Esophagus muscularis mucosa (tissue), 4 donors: ENCODE measurements at regions of chrX and their contacts with region 1.

Region 1: DNA sequence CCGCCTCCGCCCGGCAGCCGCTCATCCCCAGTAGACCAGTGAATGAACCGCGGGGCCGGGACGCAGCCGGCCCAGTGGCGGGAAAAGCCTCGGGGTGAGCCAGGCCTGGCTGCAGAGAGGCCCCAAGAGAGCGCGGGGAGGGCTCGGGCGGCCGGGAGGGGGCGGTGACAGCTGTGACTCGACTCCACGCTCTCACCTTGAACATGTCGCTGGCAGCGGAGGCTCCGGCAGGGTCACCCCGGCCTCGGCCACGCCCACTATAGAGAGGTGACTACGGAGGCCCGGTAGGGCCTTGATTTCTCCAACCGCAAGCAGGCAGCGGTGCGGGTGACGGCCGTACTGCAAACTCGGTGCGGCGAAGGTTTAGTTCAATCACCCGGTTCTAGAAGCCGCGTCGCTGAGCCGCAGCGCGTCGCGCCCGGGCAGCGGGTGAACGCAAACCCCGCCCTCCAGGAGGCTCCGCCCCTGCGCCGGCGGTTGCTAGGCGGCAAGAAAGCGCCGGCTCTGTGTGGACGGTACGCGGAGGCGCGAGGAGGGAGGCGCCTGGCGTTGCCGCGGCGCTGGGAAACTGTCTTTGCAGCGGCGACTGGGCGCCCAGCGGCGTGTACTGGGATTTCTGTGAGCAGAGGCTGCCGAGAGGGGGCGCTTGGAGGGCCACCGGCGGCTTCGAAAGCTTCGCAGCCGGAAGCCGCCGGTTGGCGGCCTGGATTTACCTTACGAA is at the starts of genes APOO and CXorf58:
- DNase-seq: peak; percentile 95
- H3K4me3 ChIP-seq: peak within 1 kb of the TSS; percentile 59 to 67 (median 66)
- H3K27ac ChIP-seq: peak within 1 kb of the TSS; percentile 88 to 90 (median 90)
- H3K4me1 ChIP-seq: peaks cover 6 to 19% (median 14%) of the 10 kb centered on the region in 4 donors
- H3K27me3 ChIP-seq: no peaks in the 10 kb centered on the region
- CTCF ChIP-seq: peak; percentile 66 to 80 (median 74)
- EP300 ChIP-seq: no peak
- POLR2A ChIP-seq: no peak
- total RNA-seq, gene APOO: 7.5 to 10.2 (median 9.5) TPM
- total RNA-seq, gene CXorf58: 0.29 TPM in 1 of 4 donors, not detected in the others

Region 2: GRCh38 chrX:23817172-23817601 is 90.5 kb before region 1 on chrX:
- intact Hi-C with region 1: no loop called
- DNase-seq: no peak
- H3K4me3 ChIP-seq: no peak overlapping the region
- H3K27ac ChIP-seq: no peak overlapping the region
- H3K4me1 ChIP-seq: no peaks in the 10 kb centered on the region
- H3K27me3 ChIP-seq: no peaks in the 10 kb centered on the region
- CTCF ChIP-seq: no peak
- EP300 ChIP-seq: no peak
- POLR2A ChIP-seq: no peak

Region 3: DNA sequence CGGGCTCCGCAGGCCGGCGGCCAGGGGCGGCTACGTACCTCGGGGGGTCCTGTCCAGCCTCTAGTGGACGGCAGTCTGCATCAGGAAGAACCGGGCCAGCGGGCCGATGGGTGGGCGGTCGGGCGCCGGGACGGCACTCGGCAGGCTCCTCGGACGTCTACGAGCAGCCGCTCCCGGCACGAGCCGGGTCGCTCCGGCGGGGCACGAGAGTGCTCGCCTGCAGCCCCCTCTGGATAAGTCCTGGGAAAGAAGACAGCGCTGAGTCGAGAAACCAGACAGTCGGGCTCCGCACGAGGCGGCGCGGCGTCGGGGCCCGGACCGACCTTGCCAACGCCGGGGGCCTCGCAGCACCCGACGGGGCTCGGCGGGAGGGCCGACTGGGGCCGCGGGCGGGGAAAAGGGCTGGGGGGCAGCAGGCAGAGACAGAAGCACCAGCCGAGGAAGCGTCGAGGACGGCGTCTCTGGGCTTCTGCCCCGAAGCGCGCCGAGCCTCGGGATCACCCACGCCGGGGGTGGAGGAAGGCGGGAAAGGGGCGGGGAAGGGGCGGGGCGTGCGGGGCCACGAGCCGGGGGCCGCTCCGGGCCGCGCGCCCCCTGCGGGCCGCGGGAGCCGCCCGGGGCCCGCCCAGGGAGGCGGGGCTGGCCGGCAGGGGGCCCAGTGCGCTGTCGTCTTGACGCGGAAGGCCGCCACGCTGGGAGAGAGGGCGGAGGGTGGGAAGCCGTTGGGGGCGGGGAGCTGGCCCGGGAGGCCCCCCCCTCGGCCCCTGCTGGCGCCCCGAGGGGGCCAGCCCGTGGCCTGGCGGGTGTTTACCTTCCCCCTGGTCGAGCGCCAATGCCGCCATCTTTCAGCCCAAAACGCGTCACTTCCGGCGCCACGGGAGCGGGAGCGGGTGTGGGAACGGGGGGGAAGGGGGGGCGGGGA is 117.4 kb after region 1 on chrX:
- intact Hi-C with region 1: loop called (anchors 5 kb)
- DNase-seq: peak; percentile 93
- H3K4me3 ChIP-seq: peak overlapping the region; percentile 73 to 84 (median 78)
- H3K27ac ChIP-seq: peak overlapping the region; percentile 90 to 97 (median 96)
- H3K4me1 ChIP-seq: peaks cover 0 to 24% (median 7%) of the 10 kb centered on the region in 4 donors
- H3K27me3 ChIP-seq: no peaks in the 10 kb centered on the region
- CTCF ChIP-seq: peak in 1 of 3 experiments; percentile 22
- EP300 ChIP-seq: no peak
- POLR2A ChIP-seq: peak; percentile 82

Region 4: GRCh38 chrX:24054182-24055042 is 146.8 kb after region 1 on chrX and contains the start of gene EIF2S3:
- intact Hi-C with region 1: loop called (anchors 2 kb)
- DNase-seq: peak; percentile 94
- H3K4me3 ChIP-seq: peak within 1 kb of the TSS in 3 of 4 donors; percentile 69 to 87 (median 70)
- H3K27ac ChIP-seq: peak within 1 kb of the TSS; percentile 85 to 90 (median 89)
- H3K4me1 ChIP-seq: peaks cover 0 to 6% (median 2%) of the 10 kb centered on the region in 4 donors
- H3K27me3 ChIP-seq: no peaks in the 10 kb centered on the region
- CTCF ChIP-seq: peak; percentile 55 to 63 (median 56)
- EP300 ChIP-seq: no peak
- POLR2A ChIP-seq: peak; percentile 38
- total RNA-seq, gene EIF2S3: 116 to 159 (median 126) TPM